ENCODE measurements at regions of chrX and their contacts with region 1.

Region 1: GRCh38 chrX:108070891-108071290 is 20.5 kb downstream of the PSMD10 start:
- DNase-seq: peak; percentile 88
- ATAC-seq: peak; percentile 82
- H3K4me3 ChIP-seq: no peak overlapping the region
- H3K27ac ChIP-seq: no peak overlapping the region
- H3K4me1 ChIP-seq: peaks cover 2% of the 10 kb centered on the region
- H3K27me3 ChIP-seq: peaks cover 36% of the 10 kb centered on the region
- CTCF ChIP-seq: no peak
- POLR2A ChIP-seq: no peak
- RAD21 ChIP-seq: no peak

Region 2: GRCh38 chrX:107537815-107538214 is 533.1 kb before region 1 on chrX:
- CTCF ChIA-PET with region 1: no interaction called
- POLR2A ChIA-PET with region 1: no interaction called
- dilution Hi-C with region 1: no loop called
- in situ Hi-C with region 1: no loop called
- intact Hi-C with region 1: loop called (anchors 5 kb)
- DNase-seq: peak; percentile 50
- ATAC-seq: peak; percentile 63
- H3K4me3 ChIP-seq: no peak overlapping the region
- H3K27ac ChIP-seq: no peak overlapping the region
- H3K4me1 ChIP-seq: no peaks in the 10 kb centered on the region
- H3K27me3 ChIP-seq: peaks cover 7% of the 10 kb centered on the region
- CTCF ChIP-seq: peak; percentile 59
- POLR2A ChIP-seq: no peak
- RAD21 ChIP-seq: peak; percentile 76

Region 3: GRCh38 chrX:107776649-107777535 is 294.0 kb before region 1 on chrX:
- CTCF ChIA-PET with region 1: no interaction called
- POLR2A ChIA-PET with region 1: no interaction called
- dilution Hi-C with region 1: no loop called
- in situ Hi-C with region 1: no loop called
- intact Hi-C with region 1: loop called (anchors 1 kb)
- DNase-seq: peak; percentile 87
- ATAC-seq: peak; percentile 88
- H3K4me3 ChIP-seq: peak overlapping the region; percentile 14; the same call in 1 of the 2 replicates
- H3K27ac ChIP-seq: no peak overlapping the region
- H3K4me1 ChIP-seq: no peaks in the 10 kb centered on the region
- H3K27me3 ChIP-seq: peaks cover 31% of the 10 kb centered on the region
- CTCF ChIP-seq: peak; percentile 80
- POLR2A ChIP-seq: no peak
- RAD21 ChIP-seq: peak; percentile 82

Region 4: DNA sequence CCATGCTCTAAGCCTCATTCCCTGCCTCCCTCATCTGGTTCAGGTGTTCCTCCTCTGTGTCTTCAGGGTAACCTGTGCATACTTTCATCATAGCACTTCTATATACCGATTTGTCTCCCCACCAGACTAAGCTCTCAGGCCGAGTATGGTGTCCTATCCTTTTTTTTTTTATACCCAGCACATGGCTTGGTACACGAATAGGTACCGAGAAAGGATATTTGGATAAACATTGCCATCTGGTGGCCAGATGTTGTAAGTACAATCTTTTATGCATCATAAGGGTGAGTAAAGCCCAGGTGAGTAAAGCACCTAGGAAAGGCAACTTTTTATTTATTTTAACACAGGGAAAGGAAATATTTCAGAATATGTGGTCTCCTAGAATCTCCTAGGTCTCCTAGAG is 176.9 kb before region 1 on chrX:
- CTCF ChIA-PET with region 1: no interaction called
- POLR2A ChIA-PET with region 1: no interaction called
- dilution Hi-C with region 1: no loop called
- in situ Hi-C with region 1: no loop called
- intact Hi-C with region 1: loop called (anchors 5 kb)
- DNase-seq: peak; percentile 42
- ATAC-seq: 0 out of 2 replicates have a peak, but pooled peaks have one; percentile 37
- H3K4me3 ChIP-seq: no peak overlapping the region
- H3K27ac ChIP-seq: no peak overlapping the region
- H3K4me1 ChIP-seq: no peaks in the 10 kb centered on the region
- H3K27me3 ChIP-seq: peaks cover 5% of the 10 kb centered on the region
- CTCF ChIP-seq: peak; percentile 54
- POLR2A ChIP-seq: no peak
- RAD21 ChIP-seq: peak; percentile 65

Region 5: DNA sequence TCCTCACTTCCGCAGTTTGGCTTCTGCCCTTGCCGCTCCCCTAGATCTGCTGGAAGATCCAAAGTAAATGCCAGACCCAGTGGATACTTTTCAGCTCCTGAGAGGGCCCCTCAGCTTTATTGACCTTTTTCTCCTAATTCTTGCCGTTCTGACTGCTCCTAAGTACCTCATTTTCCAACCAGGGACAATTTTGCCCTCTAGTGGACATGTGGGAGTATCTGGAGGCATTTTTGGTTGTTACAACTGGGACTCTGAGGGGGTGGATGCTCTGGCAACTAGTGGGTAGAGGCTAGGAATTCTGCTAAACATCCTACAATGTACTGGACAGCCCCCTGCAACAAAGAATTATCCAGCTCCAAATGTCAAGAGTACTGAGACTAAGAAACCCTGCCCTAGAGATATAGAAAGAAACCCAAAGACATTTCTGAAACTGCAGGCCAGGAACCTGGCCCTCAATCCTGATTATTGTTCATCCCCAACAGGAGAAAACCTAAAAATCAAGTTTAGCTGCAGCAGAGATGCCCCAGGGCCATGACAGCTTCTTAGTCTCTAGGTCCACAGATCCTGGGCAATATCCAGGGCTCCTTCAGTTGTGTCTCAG is 92.1 kb before region 1 on chrX:
- CTCF ChIA-PET with region 1: no interaction called
- POLR2A ChIA-PET with region 1: no interaction called
- dilution Hi-C with region 1: no loop called
- in situ Hi-C with region 1: no loop called
- intact Hi-C with region 1: loop called (anchors 5 kb)
- DNase-seq: peak; percentile 19
- ATAC-seq: peak; percentile 51; the same call in 1 of the 2 replicates
- H3K4me3 ChIP-seq: no peak overlapping the region
- H3K27ac ChIP-seq: no peak overlapping the region
- H3K4me1 ChIP-seq: no peaks in the 10 kb centered on the region
- H3K27me3 ChIP-seq: peaks cover 10% of the 10 kb centered on the region
- CTCF ChIP-seq: peak; percentile 41
- POLR2A ChIP-seq: no peak
- RAD21 ChIP-seq: peak; percentile 23

Region 6: GRCh38 chrX:108020631-108021030 is 50.3 kb before region 1 on chrX:
- CTCF ChIA-PET with region 1: interaction called, 5 read pairs
- POLR2A ChIA-PET with region 1: no interaction called
- dilution Hi-C with region 1: no loop called
- in situ Hi-C with region 1: no loop called
- intact Hi-C with region 1: loop called (anchors 1 kb)
- DNase-seq: peak; percentile 28
- ATAC-seq: peak; percentile 61
- H3K4me3 ChIP-seq: no peak overlapping the region
- H3K27ac ChIP-seq: no peak overlapping the region
- H3K4me1 ChIP-seq: peaks cover 3% of the 10 kb centered on the region; the same call in 1 of the 2 replicates
- H3K27me3 ChIP-seq: peaks cover 19% of the 10 kb centered on the region
- CTCF ChIP-seq: peak; percentile 58
- POLR2A ChIP-seq: no peak
- RAD21 ChIP-seq: peak; percentile 56